ENCODE measurements at regions of chr10 and their contacts with region 1.

Region 1: DNA sequence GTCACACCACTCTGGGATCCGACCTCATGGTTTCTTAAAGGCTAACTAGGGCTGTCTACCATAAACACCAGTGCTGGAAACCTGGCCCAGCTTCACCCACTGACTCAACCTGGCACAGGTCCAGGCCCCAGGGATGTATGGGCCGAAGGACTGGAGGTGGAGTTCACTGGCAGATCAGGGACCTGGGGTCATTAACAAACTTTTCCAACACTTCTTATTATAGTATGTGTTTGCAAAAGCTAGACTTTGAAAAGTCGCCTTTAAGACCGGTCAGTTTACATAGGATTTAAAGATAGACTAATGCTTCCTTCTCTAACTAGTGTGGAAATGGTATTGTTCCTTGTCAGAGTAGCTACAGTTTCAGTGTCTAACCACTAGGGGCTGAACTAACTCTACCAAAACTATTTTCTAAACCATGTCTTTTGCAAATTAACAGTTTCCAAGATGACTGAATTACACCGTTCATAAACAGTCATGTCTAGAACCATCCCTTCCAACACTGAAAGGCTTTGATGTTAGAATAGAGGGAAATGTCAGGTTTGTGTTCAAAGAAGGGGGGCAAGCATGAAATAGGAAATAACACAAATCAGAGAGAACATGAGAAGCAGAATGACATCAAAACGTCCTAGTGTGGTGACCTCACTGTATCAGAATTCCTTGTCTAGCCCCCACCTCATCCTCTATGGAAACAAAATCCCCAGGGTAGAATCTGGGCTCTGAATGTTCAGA is 29.7 kb downstream of the STN1 start:
- DNase-seq: no peak
- H3K4me3 Mint-ChIP-seq: no peak overlapping the region
- H3K27ac Mint-ChIP-seq: peak overlapping the region; percentile 73
- H3K4me1 Mint-ChIP-seq: peaks cover 23% of the 10 kb centered on the region
- H3K27me3 Mint-ChIP-seq: no peaks in the 10 kb centered on the region

Region 2: DNA sequence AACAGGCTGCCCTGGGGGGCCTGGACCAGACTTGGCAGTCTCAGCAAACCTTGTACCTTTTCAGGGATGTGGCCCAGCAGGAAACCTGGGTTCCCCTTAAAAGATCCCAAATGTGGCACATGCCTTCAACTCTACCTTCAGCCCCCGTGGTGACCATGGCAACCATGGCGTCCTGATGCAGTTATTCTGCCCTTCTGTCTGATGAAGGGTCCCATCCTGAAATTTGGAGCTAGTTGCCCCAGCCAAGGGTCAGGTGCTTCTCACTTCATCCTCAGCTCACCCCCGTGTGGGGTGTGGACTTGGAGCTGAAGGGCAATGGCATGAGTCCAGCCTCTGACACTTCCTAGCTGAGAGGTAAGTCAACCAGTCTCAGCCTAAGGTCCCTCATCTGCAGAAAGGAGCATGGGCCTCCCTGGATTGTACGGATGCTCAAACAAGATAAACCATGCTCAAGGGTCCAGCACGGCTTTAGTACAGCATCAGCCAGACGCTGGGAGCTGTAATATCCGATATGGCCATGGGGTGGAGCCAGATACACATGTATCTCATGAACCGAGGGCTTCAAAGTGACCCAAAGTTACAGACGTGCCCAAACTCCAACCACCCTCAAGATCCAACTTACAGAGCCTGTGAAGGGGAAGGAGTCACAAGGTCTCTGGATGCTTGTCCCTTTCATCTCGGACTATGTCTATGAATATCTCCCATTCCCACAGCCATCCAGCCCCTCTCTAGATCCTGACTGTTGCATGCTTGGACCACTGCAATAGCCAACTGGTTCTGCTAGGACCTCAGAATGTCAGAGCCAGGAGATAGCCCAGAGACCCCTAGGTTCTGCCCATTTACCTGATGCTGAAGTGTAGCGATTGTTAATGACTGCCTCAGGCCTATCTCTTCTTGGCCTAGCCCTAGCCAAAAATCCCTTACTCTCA is 175.4 kb before region 1 on chr10:
- CTCF ChIA-PET with region 1: interaction called, 20 read pairs
- intact Hi-C with region 1: loop called (anchors 1 kb)
- DNase-seq: peak; percentile 92
- H3K4me3 Mint-ChIP-seq: no peak overlapping the region
- H3K27ac Mint-ChIP-seq: no peak overlapping the region
- H3K4me1 Mint-ChIP-seq: no peaks in the 10 kb centered on the region
- H3K27me3 Mint-ChIP-seq: no peaks in the 10 kb centered on the region

Region 3: GRCh38 chr10:103918053-103918846 is 30.0 kb after region 1 on chr10 and contains the start of gene STN1:
- CTCF ChIA-PET with region 1: interaction called, 4 read pairs
- intact Hi-C with region 1: loop called (anchors 1 kb)
- DNase-seq: peak; percentile 98
- H3K4me3 Mint-ChIP-seq: peak within 1 kb of the TSS; percentile 89
- H3K27ac Mint-ChIP-seq: peak within 1 kb of the TSS; percentile 94
- H3K4me1 Mint-ChIP-seq: peaks cover 29% of the 10 kb centered on the region
- H3K27me3 Mint-ChIP-seq: no peaks in the 10 kb centered on the region
- total RNA-seq, gene STN1: 53.3 to 54.8 TPM

Region 4: GRCh38 chr10:103966671-103967447 is 78.6 kb after region 1 on chr10 and contains the start of gene SLK:
- CTCF ChIA-PET with region 1: interaction called, 5 read pairs
- intact Hi-C with region 1: loop called (anchors 1 kb)
- DNase-seq: peak; percentile 76
- H3K4me3 Mint-ChIP-seq: peak within 1 kb of the TSS; percentile 99
- H3K27ac Mint-ChIP-seq: peak within 1 kb of the TSS; percentile 92
- H3K4me1 Mint-ChIP-seq: peaks cover 26% of the 10 kb centered on the region
- H3K27me3 Mint-ChIP-seq: no peaks in the 10 kb centered on the region
- total RNA-seq, gene SLK: 16.0 to 16.1 TPM

Region 5: GRCh38 chr10:104016661-104017060 is 128.4 kb after region 1 on chr10:
- CTCF ChIA-PET with region 1: interaction called, 5 read pairs
- intact Hi-C with region 1: loop called (anchors 5 kb)
- DNase-seq: no peak
- H3K4me3 Mint-ChIP-seq: no peak overlapping the region
- H3K27ac Mint-ChIP-seq: no peak overlapping the region
- H3K4me1 Mint-ChIP-seq: peaks cover 17% of the 10 kb centered on the region
- H3K27me3 Mint-ChIP-seq: no peaks in the 10 kb centered on the region

Region 6: DNA sequence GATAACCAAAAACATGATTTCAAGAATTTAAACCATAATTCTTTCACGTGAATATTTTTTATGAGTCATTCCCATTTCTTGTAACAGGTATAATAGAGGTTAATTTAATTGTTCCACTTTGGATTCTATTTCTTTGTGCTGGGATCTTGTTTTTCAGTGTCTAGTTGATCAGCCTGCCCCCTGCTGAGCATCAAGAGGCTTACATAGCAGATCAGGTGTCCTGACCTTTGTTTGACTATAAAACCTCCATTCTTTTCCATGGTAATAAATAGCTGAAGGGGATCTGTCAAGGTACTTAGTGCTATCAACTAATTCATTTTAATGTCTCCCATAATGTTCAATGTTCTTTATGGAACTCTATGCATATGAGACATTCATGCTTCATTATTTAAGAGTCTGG is 192.5 kb after region 1 on chr10:
- CTCF ChIA-PET with region 1: interaction called, 12 read pairs
- intact Hi-C with region 1: loop called (anchors 1 kb)
- DNase-seq: peak; percentile 19
- H3K4me3 Mint-ChIP-seq: no peak overlapping the region
- H3K27ac Mint-ChIP-seq: no peak overlapping the region
- H3K4me1 Mint-ChIP-seq: no peaks in the 10 kb centered on the region
- H3K27me3 Mint-ChIP-seq: no peaks in the 10 kb centered on the region

Region 7: DNA sequence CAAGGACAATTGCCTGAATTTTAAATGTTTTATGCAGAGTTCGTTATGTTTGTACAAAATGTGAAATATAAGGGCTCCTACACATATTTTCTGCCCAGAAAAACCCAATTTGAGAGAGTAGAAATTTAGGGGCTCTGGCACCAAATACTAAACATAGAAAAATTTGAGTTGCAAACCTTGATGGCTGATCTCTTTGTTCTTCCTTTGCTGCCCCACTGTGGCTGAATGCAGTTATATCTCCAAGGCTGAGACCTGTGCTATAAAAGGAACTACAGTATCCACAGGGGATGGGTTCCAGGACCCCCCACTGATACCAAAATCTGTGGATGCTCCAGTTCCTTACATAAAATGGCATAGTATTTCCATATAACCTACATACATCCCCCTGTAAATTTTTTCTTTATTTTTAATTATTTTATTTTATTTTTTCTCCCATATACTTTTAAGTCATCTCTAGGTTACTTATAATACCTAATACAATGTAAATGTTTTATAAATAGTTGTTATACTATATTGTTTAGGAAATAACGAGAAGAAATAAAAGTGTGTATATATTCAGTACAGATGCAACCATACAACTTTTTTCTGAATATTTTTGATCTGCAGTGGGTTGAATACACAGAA is 321.4 kb after region 1 on chr10:
- CTCF ChIA-PET with region 1: interaction called, 4 read pairs
- intact Hi-C with region 1: loop called (anchors 1 kb)
- DNase-seq: peak; percentile 67
- H3K4me3 Mint-ChIP-seq: no peak overlapping the region
- H3K27ac Mint-ChIP-seq: no peak overlapping the region
- H3K4me1 Mint-ChIP-seq: no peaks in the 10 kb centered on the region
- H3K27me3 Mint-ChIP-seq: no peaks in the 10 kb centered on the region